Heart left ventricle (tissue), 16 donors: ENCODE measurements at regions of chr1 and their contacts with region 1.

Region 1: DNA sequence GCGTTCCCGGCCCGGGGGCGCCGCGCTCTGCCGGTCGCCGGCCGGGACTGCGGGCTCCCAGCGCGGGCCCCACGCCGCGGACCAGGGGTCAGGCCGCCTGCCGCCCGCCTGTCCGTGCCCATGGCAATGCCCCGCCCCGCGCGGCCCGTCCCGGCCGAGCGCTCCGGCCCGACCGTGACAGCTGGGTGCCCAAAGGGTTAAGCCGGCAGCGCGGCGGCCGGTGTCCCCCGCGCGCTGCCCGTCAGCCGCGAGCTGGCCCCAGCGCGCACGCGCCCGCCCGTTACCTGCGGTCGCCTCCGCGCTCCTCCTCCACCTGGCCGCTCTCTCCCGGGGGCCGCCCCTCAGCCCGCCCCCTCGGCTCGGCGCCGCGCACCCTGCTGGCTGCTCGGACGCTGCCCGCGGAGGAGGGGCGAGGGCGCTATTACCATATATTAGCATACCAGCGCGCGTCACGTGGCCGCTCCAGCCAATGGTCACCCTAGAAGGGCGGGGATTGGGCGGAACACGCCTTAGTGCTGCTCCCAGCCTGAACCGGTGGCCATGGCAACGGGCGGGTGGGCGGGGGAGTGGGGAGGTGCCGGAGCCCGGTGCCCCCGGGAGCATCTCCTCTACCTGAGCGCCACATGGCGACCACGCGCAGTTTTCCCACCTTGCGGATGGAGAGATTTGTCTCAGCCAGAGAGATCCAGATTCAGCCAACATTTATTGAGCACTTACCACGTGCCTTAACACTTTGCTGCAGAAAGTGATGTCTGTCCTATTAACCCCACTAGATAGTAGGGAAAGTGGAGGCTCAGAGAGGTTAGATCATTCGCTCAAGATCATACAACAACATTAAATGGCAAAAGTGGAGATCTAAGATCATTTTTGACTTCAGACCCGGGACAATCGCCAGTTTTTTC is at the start of gene PHC2:
- DNase-seq: peak; percentile 97 to 99 (median 98)
- ATAC-seq: peak; percentile 96 to 97 (median 97)
- H3K4me3 ChIP-seq: peak within 1 kb of the TSS; percentile 64 to 93 (median 79)
- H3K27ac ChIP-seq: peak within 1 kb of the TSS; percentile 74 to 90 (median 82)
- H3K4me1 ChIP-seq: peaks cover 0 to 70% (median 26%) of the 10 kb centered on the region in 12 donors
- H3K27me3 ChIP-seq: peaks cover 0 to 4% (median 0%) of the 10 kb centered on the region in 9 donors
- CTCF ChIP-seq: peak in 9 of 12 donors; percentile 16 to 70 (median 41)
- POLR2A ChIP-seq: peak; percentile 19 to 56
- total RNA-seq, gene PHC2: 86.5 to 194 (median 99.4) TPM

Region 2: GRCh38 chr1:33388805-33389771 is 41.9 kb before region 1 on chr1:
- intact Hi-C with region 1: loop called in 4 of 10 experiments (anchors 5 kb)
- DNase-seq: peak in 3 of 5 donors; percentile 44 to 75 (median 44)
- ATAC-seq: peak; percentile 46 to 69 (median 64)
- H3K4me3 ChIP-seq: no peak overlapping the region
- H3K27ac ChIP-seq: peak overlapping the region in 11 of 12 donors; percentile 3 to 79 (median 56)
- H3K4me1 ChIP-seq: peaks cover 5 to 63% (median 36%) of the 10 kb centered on the region in 12 donors
- H3K27me3 ChIP-seq: no peaks in the 10 kb centered on the region
- CTCF ChIP-seq: no peak
- POLR2A ChIP-seq: no peak

Region 3: DNA sequence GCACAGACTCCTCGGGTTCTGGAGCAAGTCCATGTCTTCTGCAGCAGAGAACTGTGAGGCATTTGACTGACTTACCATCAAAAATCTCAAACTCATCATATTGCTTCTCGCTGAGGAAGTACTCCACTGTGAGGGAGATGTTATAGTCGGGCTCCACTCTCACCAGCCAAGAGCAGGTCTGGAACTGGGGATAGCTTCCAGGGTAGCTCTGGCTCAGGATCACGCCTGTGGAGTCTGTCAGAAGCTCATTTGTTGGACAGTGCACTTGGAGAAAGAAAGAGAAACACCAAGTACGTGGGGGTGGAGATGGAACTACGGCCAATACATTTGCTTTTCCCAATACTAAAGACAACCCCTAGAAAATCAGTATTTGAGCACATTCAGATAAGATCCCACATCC is 152.6 kb after region 1 on chr1:
- intact Hi-C with region 1: loop called in 1 of 10 experiments (anchors 5 kb)
- DNase-seq: no peak
- ATAC-seq: peak in 1 of 4 donors; percentile 21
- H3K4me3 ChIP-seq: no peak overlapping the region
- H3K27ac ChIP-seq: no peak overlapping the region
- H3K4me1 ChIP-seq: peaks cover 0 to 18% (median 4%) of the 10 kb centered on the region in 12 donors
- H3K27me3 ChIP-seq: no peaks in the 10 kb centered on the region
- CTCF ChIP-seq: no peak
- POLR2A ChIP-seq: no peak